ENCODE measurements at regions of chr11 and their contacts with region 1.

Region 1: GRCh38 chr11:20609727-20610707 is 10.6 kb downstream of the SLC6A5 start:
- DNase-seq: peak; percentile 90
- H3K4me3 ChIP-seq: peak overlapping the region in 1 of 2 experiments; percentile 45; a peak in 2 of 4 replicates
- H3K27ac ChIP-seq: peak overlapping the region in 1 of 2 experiments; percentile 16; a peak in 1 of 4 replicates
- H3K4me1 ChIP-seq: peaks cover 0 to 19% of the 10 kb centered on the region in 2 experiments; a peak in 1 of 4 replicates
- H3K27me3 ChIP-seq: no peaks in the 10 kb centered on the region
- CTCF ChIP-seq: peak; percentile 82
- EP300 ChIP-seq: no peak; a peak in 1 of 4 replicates
- RAD21 ChIP-seq: peak; percentile 99

Region 2: GRCh38 chr11:20363500-20364411 is 246.3 kb before region 1 on chr11 and contains the start of gene HTATIP2:
- CTCF ChIA-PET with region 1: interaction called, 12 read pairs
- POLR2A ChIA-PET with region 1: no interaction called
- DNase-seq: no peak
- H3K4me3 ChIP-seq: no peak within 1 kb of the TSS
- H3K27ac ChIP-seq: no peak within 1 kb of the TSS
- H3K4me1 ChIP-seq: peaks cover 0 to 12% of the 10 kb centered on the region in 2 experiments; a peak in 1 of 4 replicates
- H3K27me3 ChIP-seq: no peaks in the 10 kb centered on the region
- CTCF ChIP-seq: no peak
- EP300 ChIP-seq: no peak
- RAD21 ChIP-seq: no peak
- polyA plus RNA-seq, gene HTATIP2: not detected in 2 replicates

Region 3: DNA sequence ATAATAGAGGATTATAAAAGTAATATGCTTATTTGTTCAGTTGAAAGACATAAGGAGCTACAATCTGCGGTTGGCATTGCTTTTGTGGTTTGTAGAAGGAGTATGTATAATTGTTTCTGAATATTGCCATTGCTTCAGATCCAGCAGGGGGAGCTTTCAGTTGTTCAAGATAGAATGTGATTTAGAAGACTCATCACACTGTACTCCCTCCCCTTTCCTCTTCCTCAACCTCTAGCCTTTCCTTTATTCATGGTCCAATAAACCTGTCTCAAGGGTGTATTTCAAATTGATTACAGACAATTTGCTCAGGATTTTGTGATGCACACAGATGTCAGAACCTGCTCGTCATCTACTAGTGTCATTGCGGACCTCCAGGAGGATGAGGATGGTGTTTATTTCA is 212.7 kb before region 1 on chr11:
- CTCF ChIA-PET with region 1: interaction called, 89 read pairs
- POLR2A ChIA-PET with region 1: interaction called, 5 read pairs
- DNase-seq: peak; percentile 42
- H3K4me3 ChIP-seq: no peak overlapping the region
- H3K27ac ChIP-seq: no peak overlapping the region
- H3K4me1 ChIP-seq: no peaks in the 10 kb centered on the region; a peak in 1 of 4 replicates
- H3K27me3 ChIP-seq: no peaks in the 10 kb centered on the region
- CTCF ChIP-seq: peak; percentile 76
- EP300 ChIP-seq: no peak
- RAD21 ChIP-seq: peak; percentile 70

Region 4: DNA sequence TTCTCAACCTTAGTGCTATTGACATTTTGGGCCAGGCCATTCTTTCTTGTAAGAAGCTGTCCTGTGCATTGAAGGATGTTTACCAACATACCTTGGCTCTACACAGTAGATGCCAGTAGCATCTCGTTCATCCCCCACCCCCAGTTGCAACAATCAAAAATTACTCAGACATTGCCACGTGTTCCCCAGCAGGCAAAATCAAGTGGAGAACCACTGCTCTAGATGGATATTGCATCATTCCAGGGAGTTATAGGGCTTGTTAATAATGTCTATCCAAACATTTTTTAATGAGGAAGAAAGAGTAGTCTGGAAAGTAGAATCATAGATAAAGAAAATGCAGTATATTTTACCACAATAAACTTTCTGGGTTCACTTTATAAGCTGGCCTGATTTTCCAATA is 158.4 kb before region 1 on chr11:
- CTCF ChIA-PET with region 1: interaction called, 17 read pairs
- POLR2A ChIA-PET with region 1: no interaction called
- DNase-seq: no peak
- H3K4me3 ChIP-seq: no peak overlapping the region
- H3K27ac ChIP-seq: peak overlapping the region in 1 of 2 experiments; percentile 92; a peak in 2 of 4 replicates
- H3K4me1 ChIP-seq: peaks cover 0 to 18% of the 10 kb centered on the region in 2 experiments; a peak in 2 of 4 replicates
- H3K27me3 ChIP-seq: no peaks in the 10 kb centered on the region
- CTCF ChIP-seq: no peak
- EP300 ChIP-seq: no peak
- RAD21 ChIP-seq: no peak

Region 5: GRCh38 chr11:20599221-20600019 is 10.6 kb before region 1 on chr11 and contains the start of gene SLC6A5:
- CTCF ChIA-PET with region 1: interaction called, 35 read pairs
- POLR2A ChIA-PET with region 1: no interaction called
- DNase-seq: no peak
- H3K4me3 ChIP-seq: no peak within 1 kb of the TSS
- H3K27ac ChIP-seq: no peak within 1 kb of the TSS
- H3K4me1 ChIP-seq: peaks cover 0 to 10% of the 10 kb centered on the region in 2 experiments; a peak in 2 of 4 replicates
- H3K27me3 ChIP-seq: no peaks in the 10 kb centered on the region
- CTCF ChIP-seq: no peak
- EP300 ChIP-seq: no peak
- RAD21 ChIP-seq: no peak
- polyA plus RNA-seq, gene SLC6A5: not detected in 2 replicates

Region 6: GRCh38 chr11:20671856-20672546 is 62.0 kb after region 1 on chr11:
- CTCF ChIA-PET with region 1: no interaction called
- POLR2A ChIA-PET with region 1: no interaction called
- DNase-seq: peak; percentile 67
- H3K4me3 ChIP-seq: peak overlapping the region in 1 of 2 experiments; percentile 52; a peak in 1 of 4 replicates
- H3K27ac ChIP-seq: peak overlapping the region in 1 of 2 experiments; percentile 77; a peak in 2 of 4 replicates
- H3K4me1 ChIP-seq: peaks cover 0 to 32% of the 10 kb centered on the region in 2 experiments; a peak in 2 of 4 replicates
- H3K27me3 ChIP-seq: peaks cover 36% of the 10 kb centered on the region
- CTCF ChIP-seq: peak; percentile 41
- EP300 ChIP-seq: peak in 1 of 2 experiments; percentile 79; a peak in 2 of 4 replicates
- RAD21 ChIP-seq: peak; percentile 37

Region 7: GRCh38 chr11:20840341-20840740 is 230.3 kb after region 1 on chr11:
- CTCF ChIA-PET with region 1: no interaction called
- POLR2A ChIA-PET with region 1: no interaction called
- DNase-seq: peak; percentile 17
- H3K4me3 ChIP-seq: no peak overlapping the region
- H3K27ac ChIP-seq: no peak overlapping the region; a peak in 1 of 4 replicates
- H3K4me1 ChIP-seq: peaks cover 0 to 4% of the 10 kb centered on the region in 2 experiments; a peak in 1 of 4 replicates
- H3K27me3 ChIP-seq: no peaks in the 10 kb centered on the region
- CTCF ChIP-seq: no peak
- EP300 ChIP-seq: peak in 1 of 2 experiments; percentile 34; a peak in 1 of 4 replicates
- RAD21 ChIP-seq: no peak

Measured in SK-N-SH (cell line).